Naive thymus-derived CD4-positive, alpha-beta T cell (primary cell): ENCODE measurements at regions of chr11 and their contacts with region 1.

Region 1: DNA sequence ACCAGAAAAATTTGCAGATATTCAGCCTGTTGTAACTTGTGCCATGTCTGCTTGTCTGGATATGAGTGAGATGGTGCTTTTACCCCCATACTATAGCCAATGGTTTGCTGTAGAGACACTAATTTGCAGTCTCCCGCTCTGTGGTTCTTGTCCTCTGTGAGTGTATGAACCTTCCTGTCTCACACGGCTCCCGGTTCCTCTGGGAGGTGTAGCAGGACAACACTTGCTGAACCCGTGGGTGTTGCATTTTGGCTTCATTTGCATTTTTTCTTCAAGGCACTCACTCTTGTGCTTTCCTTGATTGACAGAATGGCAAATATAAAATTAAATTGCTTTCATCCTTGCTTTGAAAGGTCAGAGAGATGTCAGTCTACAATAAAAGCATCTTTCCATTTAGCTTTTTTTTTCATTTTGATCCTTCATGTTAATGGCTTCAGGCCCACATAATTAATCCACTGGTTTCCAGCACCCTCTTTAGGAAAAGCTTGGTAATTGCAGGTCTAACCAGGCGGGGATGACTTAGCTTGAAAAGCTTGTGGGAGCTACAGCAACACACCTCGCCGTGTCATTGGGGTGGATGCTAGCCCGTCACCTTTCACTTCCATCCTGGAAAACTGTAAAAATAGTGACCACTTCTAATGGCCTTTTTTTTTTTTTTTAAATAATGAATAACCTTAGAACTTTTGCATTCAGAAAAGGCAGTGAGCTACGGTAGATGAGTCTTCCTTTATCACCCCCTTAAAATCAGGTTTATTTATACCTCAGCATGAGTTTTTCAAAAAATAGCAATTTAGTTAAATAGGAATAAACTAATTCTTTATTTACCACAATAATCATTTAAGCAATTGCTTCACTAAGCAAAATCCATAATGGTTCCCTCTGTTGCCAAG is 27.4 kb upstream of the ST14 start:
- DNase-seq: peak in 8 of 9 donors; percentile 38 to 76 (median 68)
- ATAC-seq: peak; percentile 91
- H3K4me3 ChIP-seq: no peak overlapping the region
- H3K4me3 Mint-ChIP-seq: no peak overlapping the region
- H3K27ac ChIP-seq: no peak overlapping the region
- H3K27ac Mint-ChIP-seq: peak overlapping the region in 1 of 9 donors; percentile 6
- H3K4me1 ChIP-seq: no peaks in the 10 kb centered on the region
- H3K4me1 Mint-ChIP-seq: no peaks in the 10 kb centered on the region
- H3K27me3 ChIP-seq: no peaks in the 10 kb centered on the region
- H3K27me3 Mint-ChIP-seq: no peaks in the 10 kb centered on the region

Region 2: GRCh38 chr11:129766898-129767604 is 365.2 kb before region 1 on chr11:
- CTCF ChIA-PET with region 1: interaction called, 5 read pairs
- POLR2A ChIA-PET with region 1: no interaction called
- intact Hi-C with region 1: loop called in 1 of 2 experiments (anchors 1 kb)
- DNase-seq: peak in 6 of 9 donors; percentile 14 to 39 (median 20)
- ATAC-seq: peak; percentile 40
- H3K4me3 ChIP-seq: no peak overlapping the region
- H3K4me3 Mint-ChIP-seq: peak overlapping the region in 2 of 10 donors; percentile 1 to 50
- H3K27ac ChIP-seq: no peak overlapping the region
- H3K27ac Mint-ChIP-seq: peak overlapping the region in 2 of 9 donors; percentile 6 to 29
- H3K4me1 ChIP-seq: no peaks in the 10 kb centered on the region
- H3K4me1 Mint-ChIP-seq: peaks cover 0 to 11% (median 5%) of the 10 kb centered on the region in 7 donors
- H3K27me3 ChIP-seq: no peaks in the 10 kb centered on the region
- H3K27me3 Mint-ChIP-seq: peaks cover 0 to 10% (median 4%) of the 10 kb centered on the region in 5 donors

Region 3: GRCh38 chr11:129881570-129882170 is 250.5 kb before region 1 on chr11:
- CTCF ChIA-PET with region 1: interaction called, 14 read pairs
- POLR2A ChIA-PET with region 1: no interaction called
- intact Hi-C with region 1: loop called (anchors 1 kb)
- DNase-seq: peak; percentile 24 to 54 (median 44)
- ATAC-seq: peak; percentile 71
- H3K4me3 ChIP-seq: no peak overlapping the region
- H3K4me3 Mint-ChIP-seq: no peak overlapping the region
- H3K27ac ChIP-seq: no peak overlapping the region
- H3K27ac Mint-ChIP-seq: peak overlapping the region in 2 of 9 donors; percentile 56 to 63
- H3K4me1 ChIP-seq: no peaks in the 10 kb centered on the region
- H3K4me1 Mint-ChIP-seq: peaks cover 0 to 20% (median 4%) of the 10 kb centered on the region in 7 donors
- H3K27me3 ChIP-seq: no peaks in the 10 kb centered on the region
- H3K27me3 Mint-ChIP-seq: no peaks in the 10 kb centered on the region

Region 4: GRCh38 chr11:129917231-129917630 is 215.0 kb before region 1 on chr11:
- CTCF ChIA-PET with region 1: interaction called, 13 read pairs
- POLR2A ChIA-PET with region 1: no interaction called
- intact Hi-C with region 1: no loop called
- DNase-seq: no peak
- ATAC-seq: no peak
- H3K4me3 ChIP-seq: no peak overlapping the region
- H3K4me3 Mint-ChIP-seq: no peak overlapping the region
- H3K27ac ChIP-seq: no peak overlapping the region
- H3K27ac Mint-ChIP-seq: no peak overlapping the region
- H3K4me1 ChIP-seq: no peaks in the 10 kb centered on the region
- H3K4me1 Mint-ChIP-seq: peaks cover 0 to 12% (median 5%) of the 10 kb centered on the region in 7 donors
- H3K27me3 ChIP-seq: no peaks in the 10 kb centered on the region
- H3K27me3 Mint-ChIP-seq: no peaks in the 10 kb centered on the region

Region 5: DNA sequence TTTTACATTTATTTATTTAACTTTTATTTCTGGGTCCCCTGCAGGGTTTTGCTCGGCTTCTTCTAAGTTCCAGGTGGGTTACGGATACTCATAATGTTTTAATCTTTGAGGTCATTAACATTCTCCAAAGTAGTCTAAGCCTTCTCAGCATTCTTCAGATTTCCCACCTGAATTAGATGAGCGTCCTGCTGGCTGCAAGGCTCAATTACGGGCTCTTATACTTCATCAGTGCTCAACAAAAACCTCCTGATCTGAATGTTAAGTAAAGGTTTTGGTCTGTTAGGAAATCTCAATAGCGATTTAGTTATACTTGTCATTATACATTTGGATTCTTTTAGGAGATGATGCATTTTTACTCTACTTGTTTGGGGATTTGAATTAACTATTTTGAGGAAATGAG is 209.5 kb before region 1 on chr11:
- CTCF ChIA-PET with region 1: interaction called, 27 read pairs
- POLR2A ChIA-PET with region 1: interaction called, 4 read pairs
- intact Hi-C with region 1: loop called (anchors 1 kb)
- DNase-seq: peak in 1 of 9 donors; percentile 0
- ATAC-seq: no peak
- H3K4me3 ChIP-seq: no peak overlapping the region
- H3K4me3 Mint-ChIP-seq: peak overlapping the region in 1 of 10 donors; percentile 35
- H3K27ac ChIP-seq: no peak overlapping the region
- H3K27ac Mint-ChIP-seq: peak overlapping the region in 7 of 9 donors; percentile 13 to 58 (median 28)
- H3K4me1 ChIP-seq: peaks cover 0 to 4% of the 10 kb centered on the region in 2 donors
- H3K4me1 Mint-ChIP-seq: peaks cover 6 to 22% (median 18%) of the 10 kb centered on the region in 7 donors
- H3K27me3 ChIP-seq: no peaks in the 10 kb centered on the region
- H3K27me3 Mint-ChIP-seq: no peaks in the 10 kb centered on the region

Region 6: DNA sequence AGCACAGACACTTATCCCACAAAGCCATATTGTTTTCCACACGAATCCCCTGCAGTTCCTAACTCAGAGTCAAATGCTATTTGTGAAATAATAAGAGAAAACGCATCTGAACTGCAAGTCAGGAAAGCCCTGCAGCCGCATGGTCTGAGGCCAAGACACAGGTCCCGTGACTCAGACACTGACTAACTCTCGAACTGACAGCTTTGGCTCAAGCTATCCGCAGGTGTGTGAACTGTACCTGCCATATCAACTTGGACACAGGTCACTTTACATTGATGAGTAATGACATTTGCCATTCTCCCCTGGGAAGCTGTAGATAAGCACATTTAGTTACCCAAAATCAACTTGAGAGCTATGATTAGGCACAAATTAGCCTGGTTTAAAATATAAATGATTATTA is 201.9 kb before region 1 on chr11:
- CTCF ChIA-PET with region 1: interaction called, 14 read pairs
- POLR2A ChIA-PET with region 1: interaction called, 4 read pairs
- intact Hi-C with region 1: no loop called
- DNase-seq: no peak
- ATAC-seq: peak; percentile 54
- H3K4me3 ChIP-seq: no peak overlapping the region
- H3K4me3 Mint-ChIP-seq: no peak overlapping the region
- H3K27ac ChIP-seq: no peak overlapping the region
- H3K27ac Mint-ChIP-seq: no peak overlapping the region
- H3K4me1 ChIP-seq: no peaks in the 10 kb centered on the region
- H3K4me1 Mint-ChIP-seq: no peaks in the 10 kb centered on the region
- H3K27me3 ChIP-seq: no peaks in the 10 kb centered on the region
- H3K27me3 Mint-ChIP-seq: no peaks in the 10 kb centered on the region

Region 7: GRCh38 chr11:129992161-129992944 is 139.9 kb before region 1 on chr11:
- CTCF ChIA-PET with region 1: interaction called, 39 read pairs
- POLR2A ChIA-PET with region 1: interaction called, 4 read pairs
- intact Hi-C with region 1: loop called (anchors 1 kb)
- DNase-seq: peak in 7 of 9 donors; percentile 9 to 55 (median 33)
- ATAC-seq: peak; percentile 73
- H3K4me3 ChIP-seq: no peak overlapping the region
- H3K4me3 Mint-ChIP-seq: no peak overlapping the region
- H3K27ac ChIP-seq: no peak overlapping the region
- H3K27ac Mint-ChIP-seq: peak overlapping the region in 3 of 9 donors; percentile 32 to 66 (median 36)
- H3K4me1 ChIP-seq: no peaks in the 10 kb centered on the region
- H3K4me1 Mint-ChIP-seq: peaks cover 5 to 26% (median 19%) of the 10 kb centered on the region in 7 donors
- H3K27me3 ChIP-seq: no peaks in the 10 kb centered on the region
- H3K27me3 Mint-ChIP-seq: no peaks in the 10 kb centered on the region